Heart right ventricle (tissue), 16 donors: ENCODE measurements at regions of chr15 and their contacts with region 1.

Region 1: GRCh38 chr15:27358751-27359434 is 387.9 kb downstream of the GABRG3 start:
- DNase-seq: no peak
- ATAC-seq: no peak
- H3K4me3 ChIP-seq: no peak overlapping the region
- H3K27ac ChIP-seq: no peak overlapping the region
- H3K4me1 ChIP-seq: no peaks in the 10 kb centered on the region
- H3K27me3 ChIP-seq: peaks cover 0 to 25% (median 9%) of the 10 kb centered on the region in 7 donors
- CTCF ChIP-seq: peak in 8 of 9 donors; percentile 37 to 76 (median 56)

Region 2: GRCh38 chr15:26891448-26892181 is 467.3 kb before region 1 on chr15:
- intact Hi-C with region 1: loop called in 4 of 10 experiments (anchors 5 to 10 kb)
- DNase-seq: peak; percentile 44 to 50
- ATAC-seq: peak in 7 of 8 donors; percentile 47 to 87 (median 68)
- H3K4me3 ChIP-seq: peak overlapping the region in 8 of 10 donors; percentile 21 to 44 (median 30)
- H3K27ac ChIP-seq: no peak overlapping the region
- H3K4me1 ChIP-seq: peaks cover 0 to 12% (median 10%) of the 10 kb centered on the region in 9 donors
- H3K27me3 ChIP-seq: peaks cover 0 to 45% (median 29%) of the 10 kb centered on the region in 7 donors
- CTCF ChIP-seq: peak in 8 of 9 donors; percentile 51 to 73 (median 60)

Region 3: GRCh38 chr15:26974120-26974780 is 384.6 kb before region 1 on chr15:
- intact Hi-C with region 1: loop called in 1 of 10 experiments (anchors 10 kb)
- DNase-seq: no peak
- ATAC-seq: no peak
- H3K4me3 ChIP-seq: no peak overlapping the region
- H3K27ac ChIP-seq: no peak overlapping the region
- H3K4me1 ChIP-seq: no peaks in the 10 kb centered on the region
- H3K27me3 ChIP-seq: peaks cover 0 to 47% (median 34%) of the 10 kb centered on the region in 7 donors
- CTCF ChIP-seq: peak in 4 of 9 donors; percentile 9 to 33 (median 17)

Region 4: DNA sequence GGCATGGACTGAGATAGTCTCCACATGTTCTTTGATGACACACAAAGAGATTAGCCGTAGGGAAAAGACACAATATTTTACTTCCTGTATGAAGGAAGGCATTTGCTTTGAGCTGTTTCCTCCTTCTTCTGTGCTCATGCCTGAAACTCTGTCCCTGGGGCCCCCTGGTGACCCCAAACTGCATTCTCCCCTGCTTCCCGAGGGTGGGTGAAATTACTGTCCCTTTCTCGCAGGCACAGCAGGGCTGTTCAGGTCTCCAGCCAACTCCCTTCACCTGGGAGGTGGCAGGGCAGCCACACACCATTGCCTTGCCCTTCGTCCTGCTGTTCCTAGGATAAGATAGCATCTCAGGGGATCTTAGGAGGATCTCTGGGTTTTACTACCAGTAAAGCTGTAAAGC is 308.7 kb before region 1 on chr15:
- intact Hi-C with region 1: loop called in 2 of 10 experiments (anchors 5 kb)
- DNase-seq: no peak
- ATAC-seq: no peak
- H3K4me3 ChIP-seq: no peak overlapping the region
- H3K27ac ChIP-seq: no peak overlapping the region
- H3K4me1 ChIP-seq: no peaks in the 10 kb centered on the region
- H3K27me3 ChIP-seq: peaks cover 0 to 13% (median 4%) of the 10 kb centered on the region in 7 donors
- CTCF ChIP-seq: no peak

Region 5: GRCh38 chr15:27059610-27060202 is 299.2 kb before region 1 on chr15:
- intact Hi-C with region 1: loop called in 2 of 10 experiments (anchors 5 kb)
- DNase-seq: peak in 1 of 2 donors; percentile 24
- ATAC-seq: peak in 1 of 8 donors; percentile 61
- H3K4me3 ChIP-seq: no peak overlapping the region
- H3K27ac ChIP-seq: no peak overlapping the region
- H3K4me1 ChIP-seq: no peaks in the 10 kb centered on the region
- H3K27me3 ChIP-seq: peaks cover 0 to 4% (median 0%) of the 10 kb centered on the region in 7 donors
- CTCF ChIP-seq: peak; percentile 31 to 68 (median 60)

Region 6: GRCh38 chr15:27328608-27329007 is 30.3 kb before region 1 on chr15:
- intact Hi-C with region 1: loop called in 1 of 10 experiments (anchors 1 kb)
- DNase-seq: no peak
- ATAC-seq: no peak
- H3K4me3 ChIP-seq: no peak overlapping the region
- H3K27ac ChIP-seq: no peak overlapping the region
- H3K4me1 ChIP-seq: no peaks in the 10 kb centered on the region
- H3K27me3 ChIP-seq: peaks cover 0 to 3% (median 0%) of the 10 kb centered on the region in 7 donors
- CTCF ChIP-seq: no peak

Region 7: GRCh38 chr15:27619204-27619603 is 260.3 kb after region 1 on chr15:
- intact Hi-C with region 1: no loop called
- DNase-seq: no peak
- ATAC-seq: no peak
- H3K4me3 ChIP-seq: no peak overlapping the region
- H3K27ac ChIP-seq: no peak overlapping the region
- H3K4me1 ChIP-seq: no peaks in the 10 kb centered on the region
- H3K27me3 ChIP-seq: no peaks in the 10 kb centered on the region
- CTCF ChIP-seq: no peak